ENCODE measurements at regions of chr6 and their contacts with region 1.

Region 1: DNA sequence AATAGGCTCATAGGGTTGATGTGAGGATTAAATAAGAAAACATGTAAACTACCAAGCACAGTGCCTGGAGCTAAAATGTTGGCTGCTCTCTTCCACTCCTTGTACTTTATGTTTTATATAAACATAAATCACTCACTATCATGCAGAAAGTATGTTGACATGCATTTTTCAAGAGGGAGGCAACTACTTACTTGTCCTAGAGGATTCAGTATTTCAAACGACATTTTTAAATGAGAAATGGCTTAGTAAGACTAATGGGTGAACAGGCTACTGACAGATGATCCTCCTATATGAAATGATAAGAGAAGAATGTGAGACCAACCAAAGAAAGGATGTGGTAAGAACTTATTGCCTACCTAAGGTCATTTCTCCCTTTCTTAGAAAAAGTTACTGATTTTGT is 21.0 kb downstream of the LATS1 start:
- DNase-seq: no peak
- CTCF ChIP-seq: no peak

Region 2: GRCh38 chr6:149405823-149406765 is 290.8 kb before region 1 on chr6:
- CTCF ChIA-PET with region 1: no interaction called
- POLR2A ChIA-PET with region 1: no interaction called
- DNase-seq: no peak
- CTCF ChIP-seq: no peak

Region 3: DNA sequence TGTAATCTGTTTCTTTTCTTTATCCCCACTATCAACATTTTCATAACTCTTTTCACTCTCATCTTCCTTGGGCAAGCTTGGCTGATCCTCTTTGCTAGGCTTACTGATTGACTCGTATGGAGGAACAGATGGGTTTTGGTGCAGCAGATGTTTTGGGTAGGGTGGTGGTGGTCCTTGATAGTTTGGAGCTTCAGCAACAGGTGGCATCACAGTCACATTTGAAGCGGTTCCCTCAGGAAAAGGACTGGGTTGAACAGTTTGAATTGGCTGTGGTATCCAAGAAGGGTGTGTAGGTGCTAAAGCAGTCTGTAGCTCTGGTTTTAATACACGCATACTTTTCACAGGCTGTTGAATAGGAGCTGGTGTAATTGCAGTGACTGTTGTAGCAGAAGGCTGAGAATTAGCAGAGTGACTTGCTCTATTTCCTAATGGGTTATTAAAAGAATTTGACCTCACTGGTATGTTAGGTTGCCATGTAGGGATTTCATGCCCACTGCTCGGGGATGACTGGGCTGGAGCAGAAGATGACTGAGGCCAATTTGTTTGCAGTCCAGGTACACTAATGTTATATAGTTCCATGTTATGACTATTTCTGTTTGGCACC is 13.5 kb before region 1 on chr6:
- CTCF ChIA-PET with region 1: interaction called, 13 read pairs
- POLR2A ChIA-PET with region 1: no interaction called
- DNase-seq: no peak
- CTCF ChIP-seq: no peak

Region 4: DNA sequence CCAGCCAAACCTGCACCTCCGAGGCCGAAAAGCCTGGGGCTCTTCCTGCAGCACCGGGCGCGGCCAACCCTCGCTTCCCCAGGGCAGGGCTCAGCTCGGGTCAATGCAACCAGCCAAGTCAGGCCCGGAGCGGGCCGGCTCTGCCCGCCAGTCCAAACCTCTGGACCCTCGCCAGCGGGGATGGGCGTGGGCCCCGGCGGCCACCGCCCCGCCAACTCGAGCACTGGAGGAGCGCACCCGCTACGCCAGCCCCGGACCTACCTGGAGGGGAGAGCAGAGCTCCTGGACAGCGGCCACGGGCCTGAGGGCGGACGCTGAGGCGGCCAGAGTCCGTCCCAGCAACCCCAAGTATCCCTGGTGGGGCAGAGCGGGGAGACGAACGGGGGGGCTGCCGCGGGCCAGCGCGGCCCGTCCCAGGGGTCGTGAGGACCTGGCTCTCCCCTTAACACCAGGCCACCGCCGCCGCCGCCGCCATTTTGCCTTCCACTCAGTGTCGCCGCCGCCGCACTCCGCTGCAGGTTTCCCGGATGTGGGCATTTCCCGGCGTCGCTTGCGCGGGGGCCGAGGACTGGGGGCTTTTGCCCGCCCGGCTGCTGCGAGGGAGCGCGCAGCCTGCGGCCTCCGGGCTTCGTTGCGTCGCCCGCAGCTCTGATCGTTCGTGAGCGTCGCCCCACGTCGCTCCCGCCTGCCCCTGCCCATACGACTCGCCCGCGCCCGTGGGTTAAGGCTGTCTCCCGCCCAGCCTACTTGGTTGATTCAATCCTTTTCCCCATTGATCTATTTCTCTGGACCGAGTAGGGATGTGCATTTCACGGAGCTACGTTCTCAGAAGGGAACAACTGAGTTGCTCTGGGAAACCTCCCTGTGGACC is 20.9 kb after region 1 on chr6 and contains the start of gene LATS1:
- CTCF ChIA-PET with region 1: interaction called, 11 read pairs
- POLR2A ChIA-PET with region 1: no interaction called
- DNase-seq: peak; percentile 92
- CTCF ChIP-seq: no peak